CD8-positive, alpha-beta T cell (primary cell): ENCODE measurements at regions of chr4 and their contacts with region 1.

Region 1: GRCh38 chr4:20166544-20166943 is 85.2 kb upstream of the SLIT2 start:
- DNase-seq: no peak
- ATAC-seq: no peak
- H3K4me3 ChIP-seq: no peak overlapping the region
- H3K4me3 Mint-ChIP-seq: no peak overlapping the region
- H3K27ac ChIP-seq: no peak overlapping the region
- H3K27ac Mint-ChIP-seq: no peak overlapping the region
- H3K4me1 ChIP-seq: no peaks in the 10 kb centered on the region
- H3K4me1 Mint-ChIP-seq: no peaks in the 10 kb centered on the region
- H3K27me3 ChIP-seq: no peaks in the 10 kb centered on the region
- H3K27me3 Mint-ChIP-seq: no peaks in the 10 kb centered on the region
- CTCF ChIP-seq: no peak

Region 2: DNA sequence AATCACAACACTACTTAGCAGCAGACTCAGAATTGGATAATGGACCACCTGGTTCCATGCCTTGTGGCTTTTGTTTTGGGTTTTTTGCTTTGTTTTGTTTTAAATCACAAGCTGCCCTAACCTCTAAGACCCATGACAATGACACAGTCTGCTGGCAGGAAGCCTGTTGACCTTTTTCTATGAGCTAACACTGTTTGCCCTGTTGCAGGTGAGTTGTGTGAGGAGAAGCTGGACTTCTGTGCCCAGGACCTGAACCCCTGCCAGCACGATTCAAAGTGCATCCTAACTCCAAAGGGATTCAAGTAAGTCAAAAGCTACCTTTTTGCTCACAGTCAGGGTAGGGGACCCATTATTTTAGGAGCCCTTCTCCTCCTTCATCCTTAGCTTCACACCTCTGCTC is 422.9 kb after region 1 on chr4:
- CTCF ChIA-PET with region 1: no interaction called
- POLR2A ChIA-PET with region 1: no interaction called
- intact Hi-C with region 1: loop called in 1 of 2 experiments (anchors 5 kb)
- DNase-seq: no peak
- ATAC-seq: no peak
- H3K4me3 ChIP-seq: no peak overlapping the region
- H3K4me3 Mint-ChIP-seq: no peak overlapping the region
- H3K27ac ChIP-seq: no peak overlapping the region
- H3K27ac Mint-ChIP-seq: no peak overlapping the region
- H3K4me1 ChIP-seq: no peaks in the 10 kb centered on the region
- H3K4me1 Mint-ChIP-seq: no peaks in the 10 kb centered on the region
- H3K27me3 ChIP-seq: no peaks in the 10 kb centered on the region
- H3K27me3 Mint-ChIP-seq: no peaks in the 10 kb centered on the region
- CTCF ChIP-seq: no peak